Esophagus squamous epithelium (tissue), 5 donors: ENCODE measurements at regions of chr1 and their contacts with region 1.

Region 1: GRCh38 chr1:43227143-43227764 is 42.5 kb upstream of the TMEM125 start:
- DNase-seq: peak; percentile 9
- H3K4me3 ChIP-seq: no peak overlapping the region
- H3K27ac ChIP-seq: no peak overlapping the region
- H3K4me1 ChIP-seq: peaks cover 3 to 18% (median 3%) of the 10 kb centered on the region in 3 donors
- H3K27me3 ChIP-seq: no peaks in the 10 kb centered on the region
- CTCF ChIP-seq: peak; percentile 88 to 95 (median 92)
- POLR2A ChIP-seq: no peak

Region 2: GRCh38 chr1:43256675-43257570 is 29.7 kb after region 1 on chr1:
- intact Hi-C with region 1: no loop called
- DNase-seq: no peak
- H3K4me3 ChIP-seq: no peak overlapping the region
- H3K27ac ChIP-seq: peak overlapping the region; percentile 53 to 84 (median 76)
- H3K4me1 ChIP-seq: peaks cover 0 to 25% (median 4%) of the 10 kb centered on the region in 3 donors
- H3K27me3 ChIP-seq: no peaks in the 10 kb centered on the region
- CTCF ChIP-seq: no peak
- POLR2A ChIP-seq: no peak

Region 3: DNA sequence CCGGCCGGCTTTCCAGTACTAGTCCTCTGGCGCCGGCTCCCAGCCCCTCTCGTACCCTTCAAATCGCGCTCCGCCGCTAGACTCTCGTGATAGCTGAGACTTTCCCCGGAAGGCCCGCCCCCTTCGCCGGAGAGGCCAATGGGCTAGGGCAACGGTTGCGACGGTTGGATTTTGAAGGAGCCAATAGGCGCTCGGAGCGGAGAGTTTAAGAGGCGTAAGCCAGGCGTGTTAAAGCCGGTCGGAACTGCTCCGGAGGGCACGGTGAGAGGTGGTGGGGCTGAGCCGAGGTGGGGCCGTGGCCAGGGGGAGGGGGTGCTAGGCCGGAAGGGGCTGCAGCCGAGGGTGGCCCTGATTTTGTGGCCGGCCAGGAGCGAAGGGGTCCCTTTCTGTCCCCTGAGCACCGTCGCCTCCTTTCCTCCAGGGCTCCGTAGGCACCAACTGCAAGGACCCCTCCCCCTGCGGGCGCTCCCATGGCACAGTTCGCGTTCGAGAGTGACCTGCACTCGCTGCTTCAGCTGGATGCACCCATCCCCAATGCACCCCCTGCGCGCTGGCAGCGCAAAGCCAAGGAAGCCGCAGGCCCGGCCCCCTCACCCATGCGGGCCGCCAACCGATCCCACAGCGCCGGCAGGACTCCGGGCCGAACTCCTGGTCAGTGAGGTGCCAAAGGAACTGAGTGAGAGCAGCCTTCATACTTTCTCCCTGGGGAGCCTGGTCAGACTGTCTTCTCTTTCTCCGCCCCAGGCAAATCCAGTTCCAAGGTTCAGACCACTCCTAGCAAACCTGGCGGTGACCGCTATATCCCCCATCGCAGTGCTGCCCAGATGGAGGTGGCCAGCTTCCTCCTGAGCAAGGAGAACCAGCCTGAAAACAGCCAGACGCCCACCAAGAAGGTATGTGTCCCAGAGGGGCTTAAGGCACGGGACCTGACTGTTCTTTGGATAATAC is 131.8 kb after region 1 on chr1 and contains the start of gene CDC20:
- intact Hi-C with region 1: no loop called
- DNase-seq: peak; percentile 94
- H3K4me3 ChIP-seq: peak within 1 kb of the TSS; percentile 49 to 83 (median 68)
- H3K27ac ChIP-seq: peak within 1 kb of the TSS; percentile 95 to 98 (median 96)
- H3K4me1 ChIP-seq: peaks cover 15 to 43% (median 18%) of the 10 kb centered on the region in 3 donors
- H3K27me3 ChIP-seq: no peaks in the 10 kb centered on the region
- CTCF ChIP-seq: no peak
- POLR2A ChIP-seq: peak in 2 of 4 donors; percentile 10 to 25
- total RNA-seq, gene CDC20: 16.5 to 96.0 (median 33.6) TPM

Region 4: DNA sequence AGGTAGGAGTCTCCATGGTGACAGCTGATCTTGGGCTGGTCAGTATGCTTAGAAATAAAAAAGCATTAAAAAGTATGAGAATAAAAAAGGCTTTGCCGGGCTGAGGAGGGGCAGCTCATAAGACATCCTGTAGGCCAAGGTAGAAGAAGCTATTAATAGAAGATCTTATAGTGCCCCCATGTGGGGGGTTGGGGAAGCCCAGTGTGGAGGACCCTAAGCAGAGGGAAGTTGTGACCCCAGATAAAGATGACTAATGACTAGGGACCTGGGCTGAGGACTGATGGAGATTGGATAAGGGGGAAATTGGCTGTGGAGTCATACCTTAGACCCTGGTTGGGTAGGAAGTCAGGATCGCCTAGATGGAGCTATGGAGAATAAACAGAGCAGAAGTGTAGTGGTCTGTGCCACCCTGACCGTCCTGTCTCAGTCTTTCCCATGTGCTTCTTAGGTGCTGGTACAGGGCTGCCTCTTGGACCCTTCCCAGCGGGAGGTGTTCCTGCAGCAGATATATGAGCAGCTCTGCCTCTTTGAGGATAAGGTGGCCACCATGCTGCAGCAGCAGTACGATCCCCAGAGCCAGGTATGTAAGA is 187.5 kb after region 1 on chr1:
- intact Hi-C with region 1: loop called (anchors 5 kb)
- DNase-seq: no peak
- H3K4me3 ChIP-seq: no peak overlapping the region
- H3K27ac ChIP-seq: no peak overlapping the region
- H3K4me1 ChIP-seq: no peaks in the 10 kb centered on the region
- H3K27me3 ChIP-seq: no peaks in the 10 kb centered on the region
- CTCF ChIP-seq: peak; percentile 47 to 69 (median 64)
- POLR2A ChIP-seq: no peak